Ascending aorta (tissue), 2 donors: ENCODE measurements at regions of chr4 and their contacts with region 1.

Region 1: DNA sequence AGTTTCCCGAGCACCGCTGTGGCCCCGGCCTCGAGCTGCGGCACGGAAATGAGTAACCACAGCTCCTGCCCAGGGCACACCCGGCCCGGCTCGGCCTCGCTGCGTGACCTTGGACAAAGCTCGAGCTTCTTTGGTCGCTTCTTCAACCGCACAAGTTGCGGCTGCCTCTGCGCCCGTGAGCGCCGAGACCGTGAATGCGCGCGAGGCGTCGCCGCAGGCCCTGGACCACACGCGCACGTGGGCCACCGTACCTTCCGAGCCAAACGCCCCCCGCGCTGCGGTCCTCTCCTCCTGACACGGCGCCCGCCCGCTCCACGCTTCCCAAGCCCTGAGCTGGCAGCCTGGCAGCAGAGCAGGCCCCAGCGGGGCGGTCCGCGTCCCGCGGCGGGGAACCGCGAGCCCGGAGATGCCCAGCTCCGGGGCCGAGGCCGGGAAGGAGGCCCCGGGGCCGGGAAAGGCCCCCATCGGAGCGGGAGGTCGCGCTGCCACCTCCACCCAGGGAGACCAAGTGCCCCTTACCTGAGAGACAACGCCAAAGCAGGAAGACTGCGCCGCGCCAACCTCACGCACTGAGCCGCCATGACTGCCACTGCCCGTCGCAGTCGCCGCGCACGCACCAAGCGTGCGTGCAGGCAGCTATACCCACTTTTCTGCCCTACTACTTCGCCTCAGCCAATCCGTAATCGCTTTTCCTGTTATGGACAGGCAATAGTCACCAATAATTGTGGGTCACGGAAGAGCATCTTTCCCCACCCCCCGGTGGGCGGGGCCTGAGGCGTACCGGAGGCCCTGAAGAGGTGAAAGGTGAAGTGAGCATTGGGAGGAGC is at the start of gene GRPEL1:
- DNase-seq: peak; percentile 98 to 100
- H3K4me3 ChIP-seq: peak within 1 kb of the TSS; percentile 90 to 94
- H3K27ac ChIP-seq: peak within 1 kb of the TSS; percentile 86 to 95
- H3K4me1 ChIP-seq: peaks cover 10 to 18% of the 10 kb centered on the region in 2 donors
- H3K27me3 ChIP-seq: no peaks in the 10 kb centered on the region
- CTCF ChIP-seq: peak in 1 of 3 experiments; percentile 4
- total RNA-seq, gene GRPEL1: 42.5 TPM

Region 2: DNA sequence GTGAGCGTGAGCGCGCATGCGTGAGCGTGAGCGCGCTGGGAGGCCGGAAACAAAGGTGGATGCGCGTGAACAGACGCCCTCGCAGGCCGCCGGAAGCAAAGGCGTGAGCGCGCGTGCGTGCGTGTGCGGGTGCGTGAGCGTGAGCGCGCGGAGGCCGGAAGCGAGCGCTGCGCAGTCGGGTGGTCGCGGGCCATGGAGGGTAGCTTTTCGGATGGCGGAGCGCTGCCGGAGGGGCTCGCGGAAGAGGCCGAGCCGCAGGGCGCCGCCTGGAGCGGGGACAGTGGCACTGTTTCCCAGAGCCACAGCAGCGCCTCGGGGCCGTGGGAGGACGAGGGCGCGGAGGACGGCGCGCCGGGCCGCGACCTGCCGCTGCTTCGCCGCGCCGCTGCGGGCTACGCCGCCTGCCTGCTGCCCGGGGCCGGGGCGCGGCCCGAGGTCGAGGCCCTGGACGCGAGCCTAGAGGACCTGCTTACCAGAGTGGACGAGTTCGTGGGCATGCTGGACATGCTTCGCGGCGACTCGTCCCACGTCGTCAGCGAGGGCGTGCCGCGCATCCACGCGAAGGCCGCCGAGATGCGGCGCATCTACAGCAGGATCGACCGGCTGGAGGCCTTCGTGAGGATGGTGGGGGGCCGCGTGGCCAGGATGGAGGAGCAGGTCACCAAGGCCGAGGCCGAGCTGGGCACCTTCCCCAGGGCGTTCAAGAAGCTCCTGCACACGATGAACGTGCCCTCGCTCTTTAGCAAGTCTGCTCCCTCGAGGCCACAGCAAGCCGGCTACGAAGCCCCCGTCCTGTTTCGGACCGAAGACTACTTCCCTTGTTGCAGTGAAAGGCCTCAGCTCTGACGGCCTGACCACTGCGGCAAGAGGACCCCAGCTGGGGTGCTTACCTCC is 351.4 kb before region 1 on chr4 and contains the start of gene BLOC1S4:
- intact Hi-C with region 1: loop called (anchors 5 kb)
- DNase-seq: peak; percentile 36 to 91
- H3K4me3 ChIP-seq: peak within 1 kb of the TSS; percentile 87 to 98
- H3K27ac ChIP-seq: peak within 1 kb of the TSS; percentile 88 to 95
- H3K4me1 ChIP-seq: peaks cover 4 to 14% of the 10 kb centered on the region in 2 donors
- H3K27me3 ChIP-seq: no peaks in the 10 kb centered on the region
- CTCF ChIP-seq: peak; percentile 21 to 31 (median 23)
- total RNA-seq, gene BLOC1S4: 37.5 TPM

Region 3: GRCh38 chr4:6909073-6909965 is 158.3 kb before region 1 on chr4 and contains the start of gene TBC1D14:
- intact Hi-C with region 1: loop called (anchors 1 kb)
- DNase-seq: peak; percentile 54 to 93
- H3K4me3 ChIP-seq: peak within 1 kb of the TSS; percentile 84 to 94
- H3K27ac ChIP-seq: peak within 1 kb of the TSS; percentile 97 to 99
- H3K4me1 ChIP-seq: peaks cover 0 to 32% of the 10 kb centered on the region in 2 donors
- H3K27me3 ChIP-seq: no peaks in the 10 kb centered on the region
- CTCF ChIP-seq: peak in 1 of 3 experiments; percentile 4
- total RNA-seq, gene TBC1D14: 26.4 TPM

Region 4: GRCh38 chr4:6974138-6974848 is 93.4 kb before region 1 on chr4:
- intact Hi-C with region 1: loop called (anchors 1 kb)
- DNase-seq: peak in 1 of 2 donors; percentile 89
- H3K4me3 ChIP-seq: no peak overlapping the region
- H3K27ac ChIP-seq: no peak overlapping the region
- H3K4me1 ChIP-seq: no peaks in the 10 kb centered on the region
- H3K27me3 ChIP-seq: no peaks in the 10 kb centered on the region
- CTCF ChIP-seq: peak; percentile 90 to 99 (median 96)

Region 5: GRCh38 chr4:7021930-7022658 is 45.6 kb before region 1 on chr4:
- intact Hi-C with region 1: no loop called
- DNase-seq: no peak
- H3K4me3 ChIP-seq: no peak overlapping the region
- H3K27ac ChIP-seq: no peak overlapping the region
- H3K4me1 ChIP-seq: no peaks in the 10 kb centered on the region
- H3K27me3 ChIP-seq: no peaks in the 10 kb centered on the region
- CTCF ChIP-seq: no peak

Region 6: GRCh38 chr4:7101692-7102515 is 34.2 kb after region 1 on chr4:
- intact Hi-C with region 1: loop called (anchors 2 kb)
- DNase-seq: peak in 1 of 2 donors; percentile 83
- H3K4me3 ChIP-seq: peak overlapping the region; percentile 57 to 70
- H3K27ac ChIP-seq: peak overlapping the region; percentile 83 to 84
- H3K4me1 ChIP-seq: peaks cover 5 to 20% of the 10 kb centered on the region in 2 donors
- H3K27me3 ChIP-seq: no peaks in the 10 kb centered on the region
- CTCF ChIP-seq: peak; percentile 41 to 72 (median 69)